Activated naive CD8-positive, alpha-beta T cell treated with anti-CD3 and anti-CD28 coated beads, Interleukin-2, amount 10 ng/mL, durations not matched to agents 7 days and 5 days (primary cell): ENCODE measurements at regions of chr22 and their contacts with region 1.

Region 1: GRCh38 chr22:20568989-20569769 is 61.8 kb downstream of the MED15 start:
- DNase-seq: peak; percentile 79
- ATAC-seq: peak; percentile 79
- H3K4me3 Mint-ChIP-seq: peak overlapping the region; percentile 67
- H3K27ac Mint-ChIP-seq: peak overlapping the region; percentile 82
- H3K4me1 Mint-ChIP-seq: peaks cover 63% of the 10 kb centered on the region
- H3K27me3 Mint-ChIP-seq: no peaks in the 10 kb centered on the region

Region 2: DNA sequence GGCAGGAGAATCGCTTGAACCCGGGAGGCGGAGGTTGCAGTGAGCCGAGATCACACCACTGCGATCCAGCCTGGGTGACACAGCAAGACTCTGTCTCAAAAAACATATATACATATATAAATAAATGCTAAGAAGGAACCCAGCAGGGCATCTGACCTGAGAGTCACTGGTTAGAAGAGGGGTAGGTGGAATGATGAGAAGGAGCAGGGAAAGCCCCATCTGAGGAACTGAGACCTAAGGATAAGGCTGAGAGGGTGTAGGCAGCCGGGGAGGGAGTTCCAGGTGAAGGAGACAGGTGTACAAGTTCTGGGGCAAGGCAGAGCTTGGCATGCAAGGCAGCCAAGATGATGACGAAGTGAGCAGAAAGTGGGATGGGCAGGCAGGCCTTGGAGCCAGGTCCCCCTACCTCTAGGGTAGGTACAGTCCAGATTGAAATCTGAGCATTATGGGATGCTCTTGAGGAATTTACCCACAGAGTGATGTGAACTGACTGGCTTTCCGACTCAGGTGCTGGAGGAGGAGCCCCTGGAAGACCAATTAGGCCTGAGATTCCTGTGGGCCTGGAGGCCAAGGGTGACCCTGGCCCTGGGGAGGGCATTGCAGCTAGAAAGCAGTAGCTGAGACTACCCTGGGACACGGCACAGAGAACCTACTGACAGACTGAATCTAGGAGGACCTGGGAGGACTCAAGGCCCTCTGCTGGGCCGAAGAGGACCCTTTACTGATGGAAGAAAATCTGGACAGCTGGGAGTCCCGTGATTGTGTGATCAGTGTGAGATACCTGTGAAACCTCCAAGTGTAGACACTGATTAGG is 96.3 kb before region 1 on chr22:
- POLR2A ChIA-PET with region 1: no interaction called
- DNase-seq: no peak
- ATAC-seq: no peak
- H3K4me3 Mint-ChIP-seq: no peak overlapping the region
- H3K27ac Mint-ChIP-seq: no peak overlapping the region
- H3K4me1 Mint-ChIP-seq: peaks cover 13% of the 10 kb centered on the region
- H3K27me3 Mint-ChIP-seq: no peaks in the 10 kb centered on the region

Region 3: GRCh38 chr22:20507253-20508066 is 61.7 kb before region 1 on chr22 and contains the start of gene MED15:
- POLR2A ChIA-PET with region 1: interaction called, 12 read pairs
- DNase-seq: peak; percentile 89
- ATAC-seq: peak; percentile 85
- H3K4me3 Mint-ChIP-seq: peak within 1 kb of the TSS; percentile 97
- H3K27ac Mint-ChIP-seq: peak within 1 kb of the TSS; percentile 98
- H3K4me1 Mint-ChIP-seq: peaks cover 39% of the 10 kb centered on the region
- H3K27me3 Mint-ChIP-seq: no peaks in the 10 kb centered on the region
- total RNA-seq, gene MED15: 227 to 233 TPM

Region 4: GRCh38 chr22:20550821-20551744 is 18.1 kb before region 1 on chr22:
- POLR2A ChIA-PET with region 1: interaction called, 16 read pairs
- DNase-seq: peak; percentile 62
- ATAC-seq: peak; percentile 36
- H3K4me3 Mint-ChIP-seq: peak overlapping the region; percentile 88
- H3K27ac Mint-ChIP-seq: peak overlapping the region; percentile 100
- H3K4me1 Mint-ChIP-seq: peaks cover 56% of the 10 kb centered on the region
- H3K27me3 Mint-ChIP-seq: no peaks in the 10 kb centered on the region

Region 5: GRCh38 chr22:20558567-20559205 is 10.5 kb before region 1 on chr22:
- POLR2A ChIA-PET with region 1: interaction called, 20 read pairs
- DNase-seq: no peak
- ATAC-seq: no peak
- H3K4me3 Mint-ChIP-seq: no peak overlapping the region
- H3K27ac Mint-ChIP-seq: peak overlapping the region; percentile 99
- H3K4me1 Mint-ChIP-seq: peaks cover 53% of the 10 kb centered on the region
- H3K27me3 Mint-ChIP-seq: no peaks in the 10 kb centered on the region